WTC11 (cell line): ENCODE measurements at regions of chr14 and their contacts with region 1.

Region 1: GRCh38 chr14:93115069-93115820 is 480 bp downstream of the ITPK1 start:
- DNase-seq: peak; percentile 75
- ATAC-seq: peak; percentile 73
- H3K4me3 Mint-ChIP-seq: peak overlapping the region; percentile 86
- H3K27ac Mint-ChIP-seq: no peak overlapping the region
- H3K4me1 Mint-ChIP-seq: peaks cover 40% of the 10 kb centered on the region
- H3K27me3 Mint-ChIP-seq: no peaks in the 10 kb centered on the region; the same call in 1 of the 2 replicates
- CTCF ChIP-seq: no peak

Region 2: GRCh38 chr14:92770484-92770883 is 344.8 kb before region 1 on chr14:
- CTCF ChIA-PET with region 1: no interaction called
- POLR2A ChIA-PET with region 1: no interaction called
- DNase-seq: no peak
- ATAC-seq: no peak
- H3K4me3 Mint-ChIP-seq: no peak overlapping the region
- H3K27ac Mint-ChIP-seq: no peak overlapping the region
- H3K4me1 Mint-ChIP-seq: peaks cover 7% of the 10 kb centered on the region
- H3K27me3 Mint-ChIP-seq: no peaks in the 10 kb centered on the region; the same call in none of the 2 replicates
- CTCF ChIP-seq: no peak

Region 3: DNA sequence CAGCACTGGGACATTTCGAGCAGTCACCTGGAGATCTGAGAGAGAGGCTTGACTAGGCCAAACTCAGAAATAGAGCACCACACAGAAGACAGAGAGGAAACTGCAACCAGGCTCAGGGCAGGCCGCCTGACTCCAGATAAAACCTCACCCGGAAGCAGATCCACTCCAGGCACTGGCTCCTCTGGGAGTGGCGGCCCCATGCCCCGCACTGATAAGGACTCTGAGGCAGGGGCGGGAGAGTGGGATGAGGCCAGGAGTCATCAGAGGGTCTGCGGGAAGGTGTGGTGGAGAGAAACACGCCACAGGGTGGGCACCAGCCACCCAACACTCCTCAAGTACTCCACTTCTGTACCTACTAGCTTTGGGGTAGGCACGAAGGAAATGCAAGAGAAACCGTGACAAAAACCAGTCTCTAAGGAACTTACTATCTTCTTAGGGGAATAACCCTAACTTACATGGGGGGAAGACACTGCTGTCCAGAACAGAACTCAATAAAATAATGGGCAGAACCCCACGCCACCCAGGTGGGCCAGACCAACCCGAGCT is 121.0 kb before region 1 on chr14:
- CTCF ChIA-PET with region 1: interaction called, 11 read pairs
- POLR2A ChIA-PET with region 1: no interaction called
- DNase-seq: no peak
- ATAC-seq: no peak
- H3K4me3 Mint-ChIP-seq: no peak overlapping the region
- H3K27ac Mint-ChIP-seq: peak overlapping the region; percentile 87; the same call in 1 of the 2 replicates
- H3K4me1 Mint-ChIP-seq: peaks cover 18% of the 10 kb centered on the region
- H3K27me3 Mint-ChIP-seq: no peaks in the 10 kb centered on the region
- CTCF ChIP-seq: no peak

Region 4: GRCh38 chr14:93045965-93046704 is 69.1 kb before region 1 on chr14:
- CTCF ChIA-PET with region 1: interaction called, 18 read pairs
- POLR2A ChIA-PET with region 1: no interaction called
- DNase-seq: no peak
- ATAC-seq: no peak
- H3K4me3 Mint-ChIP-seq: no peak overlapping the region
- H3K27ac Mint-ChIP-seq: peak overlapping the region; percentile 17; the same call in 1 of the 2 replicates
- H3K4me1 Mint-ChIP-seq: peaks cover 93% of the 10 kb centered on the region
- H3K27me3 Mint-ChIP-seq: no peaks in the 10 kb centered on the region
- CTCF ChIP-seq: no peak

Region 5: GRCh38 chr14:93103392-93104080 is 11.7 kb before region 1 on chr14:
- CTCF ChIA-PET with region 1: interaction called, 118 read pairs
- POLR2A ChIA-PET with region 1: no interaction called
- DNase-seq: no peak
- ATAC-seq: no peak
- H3K4me3 Mint-ChIP-seq: no peak overlapping the region
- H3K27ac Mint-ChIP-seq: no peak overlapping the region
- H3K4me1 Mint-ChIP-seq: peaks cover 58% of the 10 kb centered on the region
- H3K27me3 Mint-ChIP-seq: no peaks in the 10 kb centered on the region
- CTCF ChIP-seq: no peak

Region 6: DNA sequence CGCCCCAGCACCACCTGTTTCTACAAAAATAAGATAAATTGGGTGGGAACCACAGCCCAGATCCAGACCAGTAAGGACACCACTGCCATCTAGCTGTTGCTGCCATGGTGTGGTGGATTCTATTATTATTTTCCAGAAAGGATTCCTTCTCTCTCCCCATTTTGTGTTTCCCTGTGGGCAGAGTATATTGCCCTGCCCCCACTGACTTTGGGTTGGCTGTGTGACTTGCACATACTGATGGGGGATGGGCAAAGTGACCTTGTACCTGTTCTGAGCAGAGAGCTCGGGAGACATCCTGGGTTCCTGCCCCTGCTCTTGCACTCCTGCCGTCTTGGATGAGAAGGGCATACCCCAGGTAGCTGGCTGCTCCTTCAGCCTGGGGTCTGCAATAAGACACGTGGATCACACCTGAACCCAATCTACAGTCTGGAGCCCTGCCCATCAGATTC is 45.1 kb after region 1 on chr14:
- CTCF ChIA-PET with region 1: interaction called, 28 read pairs
- POLR2A ChIA-PET with region 1: interaction called, 3 read pairs
- DNase-seq: peak; percentile 29
- ATAC-seq: peak; percentile 79
- H3K4me3 Mint-ChIP-seq: no peak overlapping the region
- H3K27ac Mint-ChIP-seq: no peak overlapping the region
- H3K4me1 Mint-ChIP-seq: peaks cover 4% of the 10 kb centered on the region
- H3K27me3 Mint-ChIP-seq: no peaks in the 10 kb centered on the region
- CTCF ChIP-seq: no peak

Region 7: DNA sequence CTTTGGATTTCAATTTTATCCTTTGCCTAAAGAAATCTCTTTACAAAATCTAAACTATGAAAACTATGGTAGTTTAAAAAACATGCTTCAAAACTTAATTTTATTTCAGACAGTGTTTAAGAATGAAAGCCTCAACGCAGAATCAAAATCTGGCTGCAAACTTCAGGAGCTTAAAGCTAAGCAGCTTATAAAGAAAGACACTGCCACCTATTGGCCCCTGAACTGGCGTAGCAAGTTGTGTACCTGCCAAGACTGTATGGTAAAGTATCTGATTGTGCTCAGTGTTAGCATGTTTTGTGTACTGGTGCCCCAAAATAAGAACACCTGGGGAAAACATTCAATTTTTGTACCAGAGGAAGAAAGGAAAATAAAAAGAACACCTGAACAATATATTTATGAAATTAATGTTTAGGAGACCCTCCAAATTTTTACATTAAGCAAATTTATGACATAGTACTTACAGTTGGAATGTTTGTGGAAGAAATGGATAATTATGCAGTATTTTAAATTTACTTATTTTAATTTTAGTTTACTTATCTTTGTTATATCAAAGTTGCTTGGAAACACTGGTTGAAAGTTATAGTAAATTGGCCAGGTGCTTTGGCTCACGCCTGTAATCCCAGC is 104.0 kb after region 1 on chr14:
- CTCF ChIA-PET with region 1: interaction called, 11 read pairs
- POLR2A ChIA-PET with region 1: no interaction called
- DNase-seq: peak; percentile 46
- ATAC-seq: peak; percentile 83; the same call in 1 of the 2 replicates
- H3K4me3 Mint-ChIP-seq: no peak overlapping the region
- H3K27ac Mint-ChIP-seq: no peak overlapping the region
- H3K4me1 Mint-ChIP-seq: no peaks in the 10 kb centered on the region
- H3K27me3 Mint-ChIP-seq: no peaks in the 10 kb centered on the region
- CTCF ChIP-seq: no peak

Region 8: DNA sequence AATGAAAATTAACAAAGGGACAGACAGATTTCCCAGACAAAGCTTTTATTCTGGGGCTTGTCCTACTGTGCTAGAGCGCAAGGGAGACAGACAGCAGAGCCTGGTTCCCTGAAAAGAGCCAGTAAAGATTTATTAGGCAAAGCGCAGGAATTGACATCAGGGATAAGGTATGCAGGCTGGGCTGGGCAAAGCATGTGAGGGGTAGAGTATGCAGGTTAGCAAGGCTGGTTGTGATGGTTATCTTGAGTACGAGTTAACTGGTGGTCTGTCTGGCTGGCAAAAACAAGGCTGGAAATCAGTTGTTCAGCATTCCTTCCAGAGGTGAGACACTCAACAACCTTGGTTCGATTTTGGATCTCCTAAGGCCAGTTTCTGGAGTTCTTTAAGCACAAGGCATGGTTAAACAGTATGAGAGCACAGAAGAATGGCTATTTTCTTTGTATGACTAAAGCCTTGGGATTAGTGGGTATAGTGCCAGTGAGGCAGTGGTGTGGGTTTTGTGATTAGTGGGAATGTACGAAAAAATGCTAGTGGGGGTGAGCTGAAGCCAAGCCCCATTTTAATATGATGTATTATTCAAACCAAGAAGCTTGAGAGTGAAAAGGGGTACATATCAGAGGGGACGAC is 186.7 kb after region 1 on chr14:
- CTCF ChIA-PET with region 1: no interaction called
- POLR2A ChIA-PET with region 1: no interaction called
- DNase-seq: no peak
- ATAC-seq: peak; percentile 79
- H3K4me3 Mint-ChIP-seq: no peak overlapping the region
- H3K27ac Mint-ChIP-seq: peak overlapping the region; percentile 95
- H3K4me1 Mint-ChIP-seq: peaks cover 46% of the 10 kb centered on the region
- H3K27me3 Mint-ChIP-seq: no peaks in the 10 kb centered on the region
- CTCF ChIP-seq: no peak